HepG2 (cell line): ENCODE measurements at regions of chr10 and their contacts with region 1.

Region 1: GRCh38 chr10:37812290-37812689 is 45.1 kb downstream of the ZNF248 start:
- DNase-seq: peak; percentile 59
- ATAC-seq: peak; percentile 65
- H3K4me3 ChIP-seq: no peak overlapping the region
- H3K27ac ChIP-seq: peak overlapping the region; percentile 27
- H3K4me1 ChIP-seq: peaks cover 13% of the 10 kb centered on the region
- H3K27me3 ChIP-seq: no peaks in the 10 kb centered on the region
- CTCF ChIP-seq: no peak
- EP300 ChIP-seq: peak in 1 of 2 experiments; percentile 35; a peak in 1 of 4 replicates
- POLR2A ChIP-seq: no peak
- RAD21 ChIP-seq: no peak

Region 2: DNA sequence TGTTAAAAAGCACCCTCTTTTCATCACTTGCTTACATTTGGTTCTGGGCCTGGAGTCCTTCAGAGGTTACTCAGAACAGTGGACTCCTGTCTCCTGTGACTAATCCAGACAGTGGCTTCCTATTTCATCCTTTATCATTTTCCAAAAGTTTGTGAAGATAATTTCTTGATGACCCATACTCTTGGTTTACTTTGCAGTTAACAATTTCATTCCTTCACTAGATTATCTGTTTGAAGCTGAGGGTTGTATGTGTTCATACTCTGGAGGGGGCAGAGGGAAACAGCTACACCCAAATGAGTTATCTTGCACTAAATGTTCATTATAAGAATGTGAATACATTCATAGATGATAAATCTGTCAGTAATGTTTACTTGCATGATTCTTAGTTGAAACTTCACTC is 79.6 kb before region 1 on chr10:
- CTCF ChIA-PET with region 1: no interaction called
- POLR2A ChIA-PET with region 1: no interaction called
- in situ Hi-C with region 1: no loop called
- intact Hi-C with region 1: no loop called
- DNase-seq: peak; percentile 21
- ATAC-seq: no peak
- H3K4me3 ChIP-seq: no peak overlapping the region
- H3K27ac ChIP-seq: no peak overlapping the region
- H3K4me1 ChIP-seq: peaks cover 17% of the 10 kb centered on the region
- H3K27me3 ChIP-seq: no peaks in the 10 kb centered on the region
- CTCF ChIP-seq: no peak
- EP300 ChIP-seq: no peak
- POLR2A ChIP-seq: no peak
- RAD21 ChIP-seq: no peak

Region 3: GRCh38 chr10:37857287-37858211 is 45.3 kb after region 1 on chr10 and contains the start of gene ZNF248:
- CTCF ChIA-PET with region 1: no interaction called
- POLR2A ChIA-PET with region 1: no interaction called
- in situ Hi-C with region 1: no loop called
- intact Hi-C with region 1: loop called (anchors 5 kb)
- DNase-seq: peak; percentile 93
- ATAC-seq: peak; percentile 96
- H3K4me3 ChIP-seq: peak within 1 kb of the TSS; percentile 71 to 91 (median 73)
- H3K27ac ChIP-seq: peak within 1 kb of the TSS; percentile 98
- H3K4me1 ChIP-seq: peaks cover 53% of the 10 kb centered on the region
- H3K27me3 ChIP-seq: no peaks in the 10 kb centered on the region; a peak in 2 of 5 replicates
- CTCF ChIP-seq: peak; percentile 36; the same call in 1 of the 2 replicates
- EP300 ChIP-seq: no peak
- POLR2A ChIP-seq: peak; percentile 98 to 99
- RAD21 ChIP-seq: peak; percentile 45
- total RNA-seq, gene ZNF248: 12.5 and 12.8 TPM in 2 replicates